ENCODE measurements at regions of chr20 and their contacts with region 1.

Region 1: DNA sequence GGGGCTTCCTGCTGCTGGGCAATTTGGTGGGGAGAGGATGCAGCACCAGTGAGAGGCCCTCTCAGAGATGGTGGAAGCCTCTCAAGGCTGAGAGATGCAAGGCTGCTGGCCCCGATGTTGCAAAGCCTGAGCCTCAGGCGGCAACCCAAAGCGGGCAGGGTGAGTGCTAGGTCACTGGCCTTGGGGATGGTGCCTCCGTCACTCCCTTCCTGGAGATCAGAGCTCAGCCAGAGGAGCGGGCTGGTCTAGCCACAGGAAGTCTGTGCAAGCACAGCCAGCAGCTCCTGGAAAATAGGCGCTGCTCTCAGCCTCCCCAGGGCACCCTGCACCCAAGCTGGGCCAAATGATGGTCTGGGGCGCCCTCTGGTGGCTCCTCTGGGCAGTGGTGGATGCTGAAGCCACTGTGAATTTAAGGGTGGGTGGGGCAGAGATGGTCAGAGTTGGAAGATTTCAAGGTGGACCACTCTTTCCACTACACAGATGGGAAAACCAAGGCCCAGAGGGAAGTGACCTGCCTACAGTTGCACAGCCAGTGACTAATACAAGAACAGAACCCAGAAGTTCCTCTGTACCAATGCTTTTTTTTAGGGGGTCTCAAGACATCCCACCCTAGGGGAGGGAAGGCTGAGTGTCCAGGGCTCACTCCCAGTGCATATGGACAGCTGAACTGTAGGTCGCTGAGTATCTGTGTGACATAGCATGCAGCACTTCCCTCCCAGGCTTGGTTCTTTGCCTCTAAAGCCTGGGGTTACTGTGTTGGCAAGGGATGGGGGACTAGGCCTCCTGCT is 20.8 kb downstream of the C20orf203 start:
- DNase-seq: peak; percentile 87
- ATAC-seq: peak; percentile 99
- H3K4me3 ChIP-seq: no peak overlapping the region
- H3K27ac ChIP-seq: no peak overlapping the region
- H3K4me1 ChIP-seq: 0 out of 2 replicates have a peak, but pooled peaks cover 3% of the 10 kb centered on the region
- H3K27me3 ChIP-seq: no peaks in the 10 kb centered on the region
- CTCF ChIP-seq: peak; percentile 93

Region 2: GRCh38 chr20:32109392-32110172 is 543.4 kb before region 1 on chr20 and contains the start of gene TM9SF4:
- CTCF ChIA-PET with region 1: no interaction called
- POLR2A ChIA-PET with region 1: no interaction called
- intact Hi-C with region 1: loop called (anchors 5 kb)
- DNase-seq: peak; percentile 96
- ATAC-seq: peak; percentile 78
- H3K4me3 ChIP-seq: peak within 1 kb of the TSS; percentile 95
- H3K27ac ChIP-seq: peak within 1 kb of the TSS; percentile 89
- H3K4me1 ChIP-seq: peaks cover 12% of the 10 kb centered on the region
- H3K27me3 ChIP-seq: 0 out of 2 replicates have a peak, but pooled peaks cover 5% of the 10 kb centered on the region
- CTCF ChIP-seq: no peak
- total RNA-seq, gene TM9SF4: 32.6 and 33.9 TPM in 2 replicates

Region 3: GRCh38 chr20:32484958-32485769 is 167.8 kb before region 1 on chr20:
- CTCF ChIA-PET with region 1: no interaction called
- POLR2A ChIA-PET with region 1: no interaction called
- intact Hi-C with region 1: no loop called
- DNase-seq: peak; percentile 82
- ATAC-seq: peak; percentile 54
- H3K4me3 ChIP-seq: peak overlapping the region; percentile 85
- H3K27ac ChIP-seq: no peak overlapping the region
- H3K4me1 ChIP-seq: peaks cover 11% of the 10 kb centered on the region
- H3K27me3 ChIP-seq: no peaks in the 10 kb centered on the region
- CTCF ChIP-seq: peak; percentile 83

Region 4: GRCh38 chr20:32521780-32522525 is 131.0 kb before region 1 on chr20:
- CTCF ChIA-PET with region 1: interaction called, 16 read pairs
- POLR2A ChIA-PET with region 1: interaction called, 4 read pairs
- intact Hi-C with region 1: loop called (anchors 1 kb)
- DNase-seq: peak; percentile 74
- ATAC-seq: peak; percentile 96
- H3K4me3 ChIP-seq: no peak overlapping the region
- H3K27ac ChIP-seq: no peak overlapping the region
- H3K4me1 ChIP-seq: no peaks in the 10 kb centered on the region
- H3K27me3 ChIP-seq: no peaks in the 10 kb centered on the region
- CTCF ChIP-seq: peak; percentile 92

Measured in PC-3 (cell line).